ENCODE measurements at regions of chr10 and their contacts with region 1.

Region 1: GRCh38 chr10:84427903-84428650 is 99.7 kb downstream of the CCSER2 start:
- DNase-seq: no peak
- H3K4me3 Mint-ChIP-seq: no peak overlapping the region
- H3K27ac Mint-ChIP-seq: no peak overlapping the region
- H3K4me1 Mint-ChIP-seq: peaks cover 28% of the 10 kb centered on the region
- H3K27me3 Mint-ChIP-seq: no peaks in the 10 kb centered on the region

Region 2: GRCh38 chr10:84375011-84375410 is 53.1 kb before region 1 on chr10:
- CTCF ChIA-PET with region 1: no interaction called
- POLR2A ChIA-PET with region 1: no interaction called
- DNase-seq: peak; percentile 66
- H3K4me3 Mint-ChIP-seq: no peak overlapping the region
- H3K27ac Mint-ChIP-seq: no peak overlapping the region
- H3K4me1 Mint-ChIP-seq: peaks cover 37% of the 10 kb centered on the region
- H3K27me3 Mint-ChIP-seq: no peaks in the 10 kb centered on the region

Region 3: GRCh38 chr10:84412482-84412881 is 15.6 kb before region 1 on chr10:
- CTCF ChIA-PET with region 1: interaction called, 10 read pairs
- POLR2A ChIA-PET with region 1: no interaction called
- DNase-seq: no peak
- H3K4me3 Mint-ChIP-seq: no peak overlapping the region
- H3K27ac Mint-ChIP-seq: no peak overlapping the region
- H3K4me1 Mint-ChIP-seq: peaks cover 2% of the 10 kb centered on the region
- H3K27me3 Mint-ChIP-seq: no peaks in the 10 kb centered on the region

Measured in activated CD4-positive, alpha-beta T cell treated with anti-CD3 and anti-CD28 coated beads, Interleukin-2, amount 10 ng/mL, durations not matched to agents 7 days and 5 days (primary cell).